ENCODE measurements at regions of chr2 and their contacts with region 1.

Region 1: GRCh38 chr2:9813312-9814133 is 29.8 kb upstream of the TAF1B start:
- DNase-seq: peak; percentile 31
- H3K4me3 ChIP-seq: no peak overlapping the region
- CTCF ChIP-seq: peak; percentile 92

Region 2: GRCh38 chr2:9234680-9235387 is 578.7 kb before region 1 on chr2:
- in situ Hi-C with region 1: no loop called
- DNase-seq: peak; percentile 68
- H3K4me3 ChIP-seq: no peak overlapping the region
- CTCF ChIP-seq: no peak

Region 3: DNA sequence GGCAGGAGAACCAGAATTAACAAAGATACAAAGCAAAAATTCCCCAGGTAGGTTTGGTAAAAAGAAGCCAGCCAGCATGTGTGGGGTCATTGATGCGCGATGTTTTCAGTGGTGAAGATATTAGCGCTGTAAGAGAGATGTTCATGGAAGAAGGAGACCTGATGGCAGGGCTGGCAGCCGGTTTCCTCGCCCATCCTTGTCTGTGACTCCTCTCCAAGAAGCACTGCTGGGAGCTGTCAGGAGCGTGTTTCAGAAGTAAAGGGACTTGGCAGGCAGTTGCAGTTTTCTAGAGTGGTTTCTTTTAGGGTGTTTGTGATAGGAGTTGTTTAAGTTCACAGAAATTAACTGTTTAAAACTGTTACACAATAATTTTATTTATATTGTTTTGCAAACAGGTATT is 54.4 kb after region 1 on chr2:
- in situ Hi-C with region 1: no loop called
- DNase-seq: no peak
- H3K4me3 ChIP-seq: no peak overlapping the region
- CTCF ChIP-seq: no peak

Region 4: GRCh38 chr2:9889812-9890261 is 76.3 kb after region 1 on chr2:
- in situ Hi-C with region 1: loop called (anchors 5 kb)
- DNase-seq: no peak
- H3K4me3 ChIP-seq: no peak overlapping the region
- CTCF ChIP-seq: no peak

Region 5: GRCh38 chr2:10030311-10030736 is 216.8 kb after region 1 on chr2:
- in situ Hi-C with region 1: loop called (anchors 5 kb)
- DNase-seq: no peak
- H3K4me3 ChIP-seq: no peak overlapping the region
- CTCF ChIP-seq: no peak

Region 6: GRCh38 chr2:10659898-10660568 is 846.5 kb after region 1 on chr2:
- in situ Hi-C with region 1: loop called (anchors 10 kb)
- DNase-seq: peak; percentile 62
- H3K4me3 ChIP-seq: no peak overlapping the region
- CTCF ChIP-seq: peak; percentile 93